ENCODE measurements at regions of chr4 and their contacts with region 1.

Region 1: DNA sequence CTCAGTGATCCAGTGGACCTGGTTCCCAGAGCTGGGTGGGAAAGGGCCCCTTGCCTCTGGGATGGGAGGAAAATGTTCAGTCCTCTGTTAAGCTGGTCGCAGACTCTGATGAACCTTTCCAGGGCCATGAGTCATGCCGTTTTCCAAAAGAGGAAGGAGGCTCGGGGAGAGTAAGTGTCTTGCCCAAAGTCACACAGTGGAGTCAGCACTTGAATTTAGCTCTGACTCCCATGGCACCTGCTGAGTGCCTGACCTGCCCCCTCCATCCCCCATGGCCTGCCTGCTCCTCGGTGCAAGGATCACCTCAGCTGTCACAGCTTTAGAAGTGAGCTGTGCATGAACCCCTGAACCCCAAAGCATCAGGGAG is 14.0 kb upstream of the KIAA0232 start:
- DNase-seq: no peak
- ATAC-seq: no peak; the same call in 1 of the 3 replicates
- H3K4me3 ChIP-seq: peak overlapping the region; percentile 5 to 62 (median 34); a peak in 4 of 6 replicates
- H3K27ac ChIP-seq: peak overlapping the region; percentile 18
- H3K4me1 ChIP-seq: peaks cover 82% of the 10 kb centered on the region
- H3K27me3 ChIP-seq: no peaks in the 10 kb centered on the region
- CTCF ChIP-seq: no peak
- EP300 ChIP-seq: no peak
- POLR2A ChIP-seq: no peak
- RAD21 ChIP-seq: no peak

Region 2: GRCh38 chr4:6640292-6641163 is 128.0 kb before region 1 on chr4 and contains the start of gene MRFAP1:
- CTCF ChIA-PET with region 1: no interaction called
- POLR2A ChIA-PET with region 1: no interaction called
- in situ Hi-C with region 1: no loop called
- intact Hi-C with region 1: no loop called
- DNase-seq: peak; percentile 86
- ATAC-seq: peak; percentile 91
- H3K4me3 ChIP-seq: peak within 1 kb of the TSS; percentile 67 to 91 (median 74)
- H3K27ac ChIP-seq: peak within 1 kb of the TSS; percentile 84
- H3K4me1 ChIP-seq: peaks cover 38% of the 10 kb centered on the region
- H3K27me3 ChIP-seq: no peaks in the 10 kb centered on the region; a peak in 1 of 5 replicates
- CTCF ChIP-seq: no peak
- EP300 ChIP-seq: no peak; a peak in 1 of 4 replicates
- POLR2A ChIP-seq: peak; percentile 83 to 94
- RAD21 ChIP-seq: no peak
- total RNA-seq, gene MRFAP1: 158 and 254 TPM in 2 replicates

Region 3: DNA sequence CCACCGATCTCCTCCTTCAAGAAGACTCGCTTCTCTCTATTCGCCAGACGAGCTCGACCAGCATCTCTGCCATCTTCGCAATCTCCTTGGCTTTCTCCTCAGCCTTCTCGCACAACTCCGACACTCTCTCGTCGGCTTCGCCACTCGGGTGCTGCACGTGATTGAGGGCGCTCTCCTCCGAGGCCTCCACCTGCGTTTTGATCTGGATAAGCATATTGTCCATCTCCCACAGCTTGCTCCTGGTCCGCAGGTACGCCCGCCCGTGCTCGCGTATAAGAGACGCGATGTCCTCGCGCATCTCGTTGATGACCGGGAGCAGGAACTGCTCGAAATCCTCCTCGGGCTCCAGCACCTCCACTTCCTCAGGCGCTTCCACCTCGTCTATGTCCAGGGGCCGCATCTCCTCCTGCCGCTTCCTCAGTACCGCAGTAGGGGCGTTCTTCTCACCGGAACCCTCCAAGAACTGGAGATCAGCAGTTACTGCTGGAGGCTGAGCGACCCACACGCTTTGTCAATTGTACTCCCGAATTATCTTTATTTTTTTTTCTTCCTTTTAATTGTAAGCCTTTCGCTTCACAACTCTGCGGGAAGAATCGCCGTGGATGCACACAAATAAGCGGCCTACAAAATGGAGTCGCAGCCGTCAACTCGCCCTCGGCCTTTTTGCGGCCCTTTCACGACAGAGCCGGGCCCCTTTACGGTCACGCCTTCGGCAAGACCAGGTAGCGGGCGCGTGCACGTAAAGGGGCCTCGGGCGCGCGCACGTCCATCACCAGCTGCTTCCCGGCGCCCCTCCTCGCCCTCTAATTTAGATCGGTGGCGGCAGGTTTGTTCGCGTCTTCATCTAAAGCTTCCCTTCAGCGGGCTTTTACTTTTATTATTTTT is 59.0 kb before region 1 on chr4 and contains the start of gene MRFAP1L1:
- CTCF ChIA-PET with region 1: no interaction called
- POLR2A ChIA-PET with region 1: interaction called, 11 read pairs
- in situ Hi-C with region 1: no loop called
- intact Hi-C with region 1: no loop called
- DNase-seq: peak; percentile 91
- ATAC-seq: peak; percentile 88
- H3K4me3 ChIP-seq: peak within 1 kb of the TSS; percentile 64 to 92 (median 90)
- H3K27ac ChIP-seq: peak within 1 kb of the TSS; percentile 65
- H3K4me1 ChIP-seq: peaks cover 51% of the 10 kb centered on the region
- H3K27me3 ChIP-seq: peaks cover 0 to 6% of the 10 kb centered on the region in 2 experiments; a peak in 1 of 5 replicates
- CTCF ChIP-seq: peak; percentile 26; the same call in 1 of the 2 replicates
- EP300 ChIP-seq: peak in 1 of 2 experiments; percentile 44; a peak in 1 of 4 replicates
- POLR2A ChIP-seq: peak in 1 of 2 experiments; percentile 65; a peak in 2 of 4 replicates
- RAD21 ChIP-seq: no peak
- total RNA-seq, gene MRFAP1L1: 76.6 and 124 TPM in 2 replicates

Region 4: DNA sequence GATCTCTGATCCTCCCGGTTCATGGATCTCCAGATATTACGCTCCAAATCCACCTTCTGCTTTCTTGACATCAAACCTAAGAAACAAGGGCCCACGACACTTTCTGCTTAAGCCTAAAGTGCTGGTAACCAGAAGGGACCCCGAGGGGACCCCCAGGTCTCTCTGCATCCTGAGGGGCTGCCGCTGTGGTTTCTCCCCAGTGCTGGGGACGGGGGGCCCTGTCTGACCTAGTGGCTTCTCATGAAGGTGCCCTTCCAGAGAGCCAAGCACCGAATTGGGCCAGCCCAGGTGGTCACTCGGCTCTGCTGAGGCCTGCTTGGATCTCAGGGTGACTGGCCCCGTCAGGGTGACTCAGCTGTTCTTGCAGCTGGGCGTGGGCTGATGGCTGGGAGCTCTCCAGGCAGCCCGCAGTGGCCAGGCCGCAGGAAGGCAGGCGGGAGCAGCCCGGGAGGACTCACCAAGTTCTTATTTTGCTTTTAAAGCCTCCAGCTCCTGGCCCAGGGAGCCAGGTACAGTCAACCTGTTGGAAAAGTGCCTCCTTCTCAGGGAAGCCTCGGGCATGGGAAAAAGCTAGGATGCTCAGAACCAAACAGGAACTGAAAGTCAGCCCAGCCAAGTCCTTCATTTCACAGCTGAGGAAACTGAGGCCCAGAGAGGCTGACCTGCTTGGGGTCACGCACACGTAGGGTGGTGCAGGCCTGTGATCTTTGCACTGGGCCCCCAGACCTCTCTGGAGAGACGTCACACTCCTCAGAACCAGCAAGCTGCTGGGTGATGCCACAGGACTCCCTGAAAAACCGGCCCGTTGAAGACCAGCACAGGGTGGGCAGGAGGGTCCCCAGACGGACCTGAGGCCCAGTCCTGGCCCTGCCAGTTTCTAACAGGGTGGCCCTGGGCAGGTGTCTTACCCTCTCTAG is 35.8 kb before region 1 on chr4:
- CTCF ChIA-PET with region 1: no interaction called
- POLR2A ChIA-PET with region 1: interaction called, 20 read pairs
- in situ Hi-C with region 1: no loop called
- intact Hi-C with region 1: no loop called
- DNase-seq: peak; percentile 77
- ATAC-seq: peak; percentile 86
- H3K4me3 ChIP-seq: peak overlapping the region; percentile 9 to 61 (median 39); a peak in 5 of 6 replicates
- H3K27ac ChIP-seq: peak overlapping the region; percentile 96
- H3K4me1 ChIP-seq: peaks cover 74% of the 10 kb centered on the region
- H3K27me3 ChIP-seq: no peaks in the 10 kb centered on the region
- CTCF ChIP-seq: no peak
- EP300 ChIP-seq: peak in 1 of 2 experiments; percentile 70; a peak in 2 of 4 replicates
- POLR2A ChIP-seq: peak in 1 of 2 experiments; percentile 73; a peak in 2 of 4 replicates
- RAD21 ChIP-seq: peak; percentile 30; the same call in 1 of the 2 replicates

Region 5: GRCh38 chr4:6749341-6750171 is 19.0 kb before region 1 on chr4:
- CTCF ChIA-PET with region 1: no interaction called
- POLR2A ChIA-PET with region 1: interaction called, 207 read pairs
- in situ Hi-C with region 1: no loop called
- intact Hi-C with region 1: no loop called
- DNase-seq: peak; percentile 91
- ATAC-seq: peak; percentile 88
- H3K4me3 ChIP-seq: peak overlapping the region; percentile 58 to 74 (median 63)
- H3K27ac ChIP-seq: peak overlapping the region; percentile 83
- H3K4me1 ChIP-seq: peaks cover 89% of the 10 kb centered on the region
- H3K27me3 ChIP-seq: no peaks in the 10 kb centered on the region; a peak in 1 of 5 replicates
- CTCF ChIP-seq: peak; percentile 38
- EP300 ChIP-seq: peak; percentile 32 to 61; a peak in 2 of 4 replicates
- POLR2A ChIP-seq: peak in 1 of 2 experiments; percentile 60; a peak in 1 of 4 replicates
- RAD21 ChIP-seq: peak; percentile 62

Region 6: DNA sequence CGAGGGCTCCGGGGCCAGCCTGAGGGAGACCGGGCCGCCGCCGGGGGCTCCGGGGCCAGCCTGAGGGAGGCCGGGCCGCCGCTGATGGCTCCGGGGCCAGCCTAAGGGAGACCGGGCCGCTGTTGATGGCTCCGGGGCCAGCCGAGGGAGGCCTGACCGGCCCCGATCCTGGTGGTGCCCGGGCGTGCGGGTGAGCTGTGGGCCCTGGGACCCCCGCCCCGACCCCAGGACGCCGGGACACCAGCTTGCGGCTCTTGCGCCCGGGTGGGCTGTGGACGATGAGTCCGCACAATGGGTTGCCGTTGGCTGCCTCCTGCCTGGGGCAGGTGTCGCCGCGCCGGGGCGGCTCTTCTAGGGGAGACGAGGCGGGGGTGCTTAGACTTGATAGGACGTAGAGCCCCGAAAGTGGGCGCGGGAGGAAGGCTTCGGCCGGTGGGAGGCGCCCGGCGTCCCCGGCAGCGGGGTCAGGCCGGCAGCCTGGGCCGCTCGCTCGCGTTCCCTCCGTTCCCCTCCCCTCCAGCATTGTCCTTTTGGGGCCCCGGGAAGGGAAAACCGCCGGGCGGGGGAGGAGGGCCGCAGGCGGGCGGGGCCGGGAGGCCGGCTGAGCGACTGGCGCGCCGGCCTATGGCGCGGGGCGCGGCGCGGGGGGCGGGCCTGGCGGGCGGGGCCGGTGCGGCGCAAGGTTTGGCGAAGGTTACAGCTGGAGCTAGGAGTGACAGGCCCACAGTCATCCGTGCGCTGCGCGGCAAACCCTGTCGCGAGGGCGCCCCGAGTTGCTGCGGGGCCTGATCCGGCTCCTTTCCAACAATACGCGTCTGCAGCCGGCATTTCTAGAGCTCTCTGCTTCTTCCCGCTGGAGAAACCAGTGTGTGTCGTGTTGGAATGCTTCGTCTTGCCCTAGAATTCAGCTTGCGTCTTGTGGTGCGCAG is 14.8 kb after region 1 on chr4:
- CTCF ChIA-PET with region 1: no interaction called
- POLR2A ChIA-PET with region 1: interaction called, 22 read pairs
- in situ Hi-C with region 1: no loop called
- intact Hi-C with region 1: no loop called
- DNase-seq: peak; percentile 80
- ATAC-seq: peak; percentile 74
- H3K4me3 ChIP-seq: peak overlapping the region; percentile 93 to 98 (median 95)
- H3K27ac ChIP-seq: peak overlapping the region; percentile 93
- H3K4me1 ChIP-seq: peaks cover 59% of the 10 kb centered on the region
- H3K27me3 ChIP-seq: no peaks in the 10 kb centered on the region; a peak in 1 of 5 replicates
- CTCF ChIP-seq: peak; percentile 65
- EP300 ChIP-seq: 0 out of 4 replicates have a peak, but pooled peaks have one; percentile 25 to 31
- POLR2A ChIP-seq: peak in 1 of 2 experiments; percentile 58; a peak in 2 of 4 replicates
- RAD21 ChIP-seq: no peak; the same call in none of the 2 replicates

Region 7: GRCh38 chr4:6802626-6803025 is 34.1 kb after region 1 on chr4:
- CTCF ChIA-PET with region 1: no interaction called
- POLR2A ChIA-PET with region 1: interaction called, 3 read pairs
- in situ Hi-C with region 1: no loop called
- intact Hi-C with region 1: loop called (anchors 1 kb)
- DNase-seq: no peak
- ATAC-seq: no peak
- H3K4me3 ChIP-seq: no peak overlapping the region
- H3K27ac ChIP-seq: no peak overlapping the region
- H3K4me1 ChIP-seq: peaks cover 14% of the 10 kb centered on the region; the same call in 1 of the 2 replicates
- H3K27me3 ChIP-seq: no peaks in the 10 kb centered on the region
- CTCF ChIP-seq: no peak
- EP300 ChIP-seq: no peak
- POLR2A ChIP-seq: no peak
- RAD21 ChIP-seq: no peak

Region 8: GRCh38 chr4:6815029-6815836 is 46.7 kb after region 1 on chr4:
- CTCF ChIA-PET with region 1: no interaction called
- POLR2A ChIA-PET with region 1: no interaction called
- in situ Hi-C with region 1: no loop called
- intact Hi-C with region 1: no loop called
- DNase-seq: no peak
- ATAC-seq: no peak
- H3K4me3 ChIP-seq: no peak overlapping the region
- H3K27ac ChIP-seq: no peak overlapping the region
- H3K4me1 ChIP-seq: peaks cover 12% of the 10 kb centered on the region; the same call in 1 of the 2 replicates
- H3K27me3 ChIP-seq: no peaks in the 10 kb centered on the region
- CTCF ChIP-seq: no peak
- EP300 ChIP-seq: no peak
- POLR2A ChIP-seq: no peak
- RAD21 ChIP-seq: no peak

Region 9: GRCh38 chr4:7042697-7043464 is 274.4 kb after region 1 on chr4 and contains the start of gene TADA2B:
- CTCF ChIA-PET with region 1: no interaction called
- POLR2A ChIA-PET with region 1: no interaction called
- in situ Hi-C with region 1: no loop called
- intact Hi-C with region 1: no loop called
- DNase-seq: peak; percentile 93
- ATAC-seq: peak; percentile 93
- H3K4me3 ChIP-seq: peak within 1 kb of the TSS; percentile 78 to 99 (median 96)
- H3K27ac ChIP-seq: peak within 1 kb of the TSS; percentile 77
- H3K4me1 ChIP-seq: peaks cover 45% of the 10 kb centered on the region
- H3K27me3 ChIP-seq: peaks cover 0 to 5% of the 10 kb centered on the region in 2 experiments; a peak in 1 of 5 replicates
- CTCF ChIP-seq: peak; percentile 45; the same call in 1 of the 2 replicates
- EP300 ChIP-seq: no peak
- POLR2A ChIP-seq: no peak
- RAD21 ChIP-seq: peak; percentile 53
- total RNA-seq, gene TADA2B: 8.6 and 8.9 TPM in 2 replicates